HCT116 (cell line): ENCODE measurements at regions of chr1 and their contacts with region 1.

Region 1: GRCh38 chr1:224851210-224851847 is 78.1 kb upstream of the DNAH14 start:
- DNase-seq: peak; percentile 35
- ATAC-seq: peak; percentile 90
- H3K4me3 ChIP-seq: no peak overlapping the region
- H3K27ac ChIP-seq: no peak overlapping the region
- H3K4me1 ChIP-seq: no peaks in the 10 kb centered on the region
- H3K27me3 ChIP-seq: no peaks in the 10 kb centered on the region
- CTCF ChIP-seq: peak; percentile 76 to 94 (median 94)
- POLR2A ChIP-seq: no peak
- RAD21 ChIP-seq: peak; percentile 69

Region 2: DNA sequence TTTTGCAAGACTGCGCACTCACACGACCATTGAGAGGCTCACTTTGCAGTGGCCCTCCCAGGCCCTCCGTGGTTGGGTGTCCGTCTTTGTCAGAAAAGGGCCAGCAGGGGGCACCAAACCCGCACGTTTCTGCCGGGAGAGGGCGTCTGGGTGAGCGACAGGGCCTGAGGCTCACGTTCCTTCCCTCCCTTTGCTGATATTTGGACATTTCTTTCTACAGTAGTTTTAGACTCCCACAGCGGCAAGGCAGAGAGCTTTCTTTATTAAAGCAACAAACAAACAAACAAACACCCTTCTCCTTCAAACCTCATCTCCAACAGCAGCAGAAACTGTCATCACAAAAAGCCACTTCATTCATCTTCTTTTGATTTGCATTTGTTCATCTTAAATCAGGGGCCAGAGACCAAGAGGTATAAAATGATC is 337.5 kb before region 1 on chr1:
- CTCF ChIA-PET with region 1: interaction called, 12 read pairs
- POLR2A ChIA-PET with region 1: no interaction called
- RAD21 ChIA-PET with region 1: interaction called in 1 of 2 experiments, 4 read pairs
- intact Hi-C with region 1: loop called (anchors 1 kb)
- DNase-seq: peak; percentile 68
- ATAC-seq: peak; percentile 100
- H3K4me3 ChIP-seq: no peak overlapping the region
- H3K27ac ChIP-seq: no peak overlapping the region
- H3K4me1 ChIP-seq: peaks cover 0 to 5% of the 10 kb centered on the region in 2 experiments; a peak in 1 of 4 replicates
- H3K27me3 ChIP-seq: no peaks in the 10 kb centered on the region
- CTCF ChIP-seq: peak; percentile 84 to 98 (median 94)
- POLR2A ChIP-seq: no peak
- RAD21 ChIP-seq: peak; percentile 99

Region 3: GRCh38 chr1:224592636-224593582 is 258.4 kb before region 1 on chr1:
- CTCF ChIA-PET with region 1: no interaction called
- POLR2A ChIA-PET with region 1: no interaction called
- RAD21 ChIA-PET with region 1: no interaction called
- intact Hi-C with region 1: no loop called
- DNase-seq: no peak
- ATAC-seq: peak; percentile 47
- H3K4me3 ChIP-seq: no peak overlapping the region
- H3K27ac ChIP-seq: no peak overlapping the region
- H3K4me1 ChIP-seq: peaks cover 0 to 2% of the 10 kb centered on the region in 2 experiments; a peak in 1 of 4 replicates
- H3K27me3 ChIP-seq: no peaks in the 10 kb centered on the region
- CTCF ChIP-seq: no peak
- POLR2A ChIP-seq: no peak
- RAD21 ChIP-seq: no peak

Region 4: DNA sequence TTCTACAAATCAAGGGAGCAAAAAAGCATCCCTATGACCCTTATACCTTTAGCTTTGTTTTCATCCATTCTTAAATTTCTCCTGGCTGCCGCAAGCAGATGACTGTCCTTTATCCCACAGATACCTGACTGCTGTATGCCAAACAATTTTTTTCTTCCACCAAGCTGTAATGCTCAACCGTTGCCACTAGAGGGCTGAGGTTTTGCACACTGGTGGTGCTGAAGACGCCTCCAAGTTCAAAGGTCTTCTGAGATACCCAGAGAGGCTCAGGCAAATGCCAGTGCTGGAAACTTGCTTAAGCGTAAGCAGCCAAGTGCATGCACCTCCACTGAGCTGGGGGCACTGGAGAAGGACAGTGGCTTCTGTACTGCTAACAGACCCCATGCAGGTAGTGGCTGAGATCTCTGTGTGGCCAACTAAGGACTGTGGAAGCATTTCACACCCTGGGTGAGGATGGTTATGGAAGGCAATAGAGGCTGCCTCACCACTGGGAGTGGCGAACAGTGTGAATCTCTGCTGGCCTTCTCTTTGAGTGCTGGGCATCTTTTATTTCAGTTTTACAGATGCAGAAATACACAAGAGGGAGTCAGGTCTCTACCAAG is 206.7 kb before region 1 on chr1:
- CTCF ChIA-PET with region 1: interaction called, 4 read pairs
- POLR2A ChIA-PET with region 1: no interaction called
- RAD21 ChIA-PET with region 1: no interaction called
- intact Hi-C with region 1: loop called (anchors 2 kb)
- DNase-seq: peak; percentile 47
- ATAC-seq: peak; percentile 85
- H3K4me3 ChIP-seq: no peak overlapping the region
- H3K27ac ChIP-seq: no peak overlapping the region
- H3K4me1 ChIP-seq: no peaks in the 10 kb centered on the region
- H3K27me3 ChIP-seq: no peaks in the 10 kb centered on the region
- CTCF ChIP-seq: peak; percentile 83 to 87 (median 85)
- POLR2A ChIP-seq: no peak
- RAD21 ChIP-seq: peak; percentile 76

Region 5: GRCh38 chr1:224700915-224701531 is 150.3 kb before region 1 on chr1:
- CTCF ChIA-PET with region 1: interaction called, 21 read pairs
- POLR2A ChIA-PET with region 1: no interaction called
- RAD21 ChIA-PET with region 1: interaction called, 3 to 6 read pairs
- intact Hi-C with region 1: no loop called
- DNase-seq: peak; percentile 24
- ATAC-seq: peak; percentile 93
- H3K4me3 ChIP-seq: no peak overlapping the region
- H3K27ac ChIP-seq: no peak overlapping the region
- H3K4me1 ChIP-seq: no peaks in the 10 kb centered on the region; a peak in 1 of 4 replicates
- H3K27me3 ChIP-seq: 0 out of 2 replicates have a peak, but pooled peaks cover 6% of the 10 kb centered on the region
- CTCF ChIP-seq: peak; percentile 54 to 76 (median 72); a peak in 5 of 6 replicates
- POLR2A ChIP-seq: no peak
- RAD21 ChIP-seq: peak; percentile 66

Region 6: GRCh38 chr1:225612287-225612686 is 761.0 kb after region 1 on chr1:
- CTCF ChIA-PET with region 1: no interaction called
- POLR2A ChIA-PET with region 1: no interaction called
- RAD21 ChIA-PET with region 1: no interaction called
- intact Hi-C with region 1: no loop called
- DNase-seq: no peak
- ATAC-seq: no peak
- H3K4me3 ChIP-seq: no peak overlapping the region
- H3K27ac ChIP-seq: no peak overlapping the region
- H3K4me1 ChIP-seq: peaks cover 10 to 15% of the 10 kb centered on the region in 2 experiments; a peak in 3 of 4 replicates
- H3K27me3 ChIP-seq: no peaks in the 10 kb centered on the region
- CTCF ChIP-seq: no peak
- POLR2A ChIP-seq: no peak
- RAD21 ChIP-seq: no peak